ENCODE measurements at regions of chrX and their contacts with region 1.

Region 1: GRCh38 chrX:136953867-136954787 is 73.6 kb upstream of the RBMX start:
- DNase-seq: peak; percentile 41
- H3K4me3 ChIP-seq: no peak overlapping the region
- H3K27ac ChIP-seq: no peak overlapping the region
- H3K4me1 ChIP-seq: no peaks in the 10 kb centered on the region
- H3K27me3 ChIP-seq: no peaks in the 10 kb centered on the region
- CTCF ChIP-seq: peak; percentile 48 to 59

Region 2: DNA sequence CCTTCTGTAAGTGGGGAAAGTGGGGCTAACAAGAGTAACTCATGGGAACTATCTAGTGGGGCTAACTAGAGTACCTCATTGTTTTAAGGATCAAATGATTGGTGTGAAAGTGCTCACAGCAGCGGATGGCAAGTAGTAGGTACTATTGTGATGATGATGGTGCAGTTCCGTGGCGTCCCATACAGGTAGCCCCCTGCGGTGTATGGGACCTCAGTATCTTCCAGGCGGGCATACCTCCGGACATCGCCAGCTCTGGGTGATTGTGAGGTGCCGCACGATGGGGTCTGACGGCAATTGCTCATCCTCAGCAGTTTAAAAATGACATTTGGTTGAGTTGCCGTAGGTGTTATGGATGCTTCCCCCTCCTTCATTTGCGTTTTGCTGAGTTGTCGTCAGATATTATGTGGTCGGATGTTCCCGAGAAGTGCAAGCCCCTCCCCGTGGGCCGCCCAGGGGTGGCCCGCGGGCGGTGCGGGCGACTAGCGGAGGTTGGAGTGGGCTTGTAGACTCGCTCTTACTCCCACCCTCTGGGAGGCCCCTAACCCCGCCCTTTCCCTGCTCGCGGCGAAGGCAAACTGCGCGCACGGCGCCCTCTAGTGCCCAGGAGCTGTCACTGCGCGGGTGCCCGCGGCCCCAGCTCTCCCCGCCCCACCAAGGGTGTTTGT is 98.0 kb after region 1 on chrX:
- CTCF ChIA-PET with region 1: no interaction called
- dilution Hi-C with region 1: no loop called
- in situ Hi-C with region 1: no loop called
- intact Hi-C with region 1: loop called (anchors 1 kb)
- DNase-seq: peak; percentile 14
- H3K4me3 ChIP-seq: peak overlapping the region; percentile 33 to 41 (median 36)
- H3K27ac ChIP-seq: no peak overlapping the region
- H3K4me1 ChIP-seq: no peaks in the 10 kb centered on the region
- H3K27me3 ChIP-seq: peaks cover 5% of the 10 kb centered on the region
- CTCF ChIP-seq: peak; percentile 44 to 77

Region 3: DNA sequence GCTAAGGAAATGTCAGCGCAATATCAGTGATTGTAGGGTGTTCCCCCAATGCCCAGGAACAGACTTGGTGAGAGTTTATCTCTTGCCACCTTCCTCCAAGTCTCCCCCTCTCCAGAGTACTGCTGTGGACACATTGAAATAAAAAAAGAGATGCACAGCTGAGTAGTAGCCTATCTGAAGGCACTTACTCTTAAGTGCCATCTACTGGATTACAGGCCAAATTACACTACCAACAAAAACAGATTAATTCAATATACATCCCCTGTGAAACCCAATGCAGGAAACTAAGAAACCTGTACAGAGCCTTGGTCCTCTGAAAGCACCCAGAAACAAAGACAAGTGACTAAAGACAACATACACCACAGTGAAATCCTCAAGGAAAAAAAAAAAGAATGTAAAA is 1072.1 kb after region 1 on chrX:
- CTCF ChIA-PET with region 1: no interaction called
- dilution Hi-C with region 1: no loop called
- in situ Hi-C with region 1: no loop called
- intact Hi-C with region 1: loop called (anchors 10 kb)
- DNase-seq: no peak
- H3K4me3 ChIP-seq: no peak overlapping the region
- H3K27ac ChIP-seq: no peak overlapping the region
- H3K4me1 ChIP-seq: no peaks in the 10 kb centered on the region
- H3K27me3 ChIP-seq: no peaks in the 10 kb centered on the region
- CTCF ChIP-seq: peak; percentile 7 to 33

Region 4: DNA sequence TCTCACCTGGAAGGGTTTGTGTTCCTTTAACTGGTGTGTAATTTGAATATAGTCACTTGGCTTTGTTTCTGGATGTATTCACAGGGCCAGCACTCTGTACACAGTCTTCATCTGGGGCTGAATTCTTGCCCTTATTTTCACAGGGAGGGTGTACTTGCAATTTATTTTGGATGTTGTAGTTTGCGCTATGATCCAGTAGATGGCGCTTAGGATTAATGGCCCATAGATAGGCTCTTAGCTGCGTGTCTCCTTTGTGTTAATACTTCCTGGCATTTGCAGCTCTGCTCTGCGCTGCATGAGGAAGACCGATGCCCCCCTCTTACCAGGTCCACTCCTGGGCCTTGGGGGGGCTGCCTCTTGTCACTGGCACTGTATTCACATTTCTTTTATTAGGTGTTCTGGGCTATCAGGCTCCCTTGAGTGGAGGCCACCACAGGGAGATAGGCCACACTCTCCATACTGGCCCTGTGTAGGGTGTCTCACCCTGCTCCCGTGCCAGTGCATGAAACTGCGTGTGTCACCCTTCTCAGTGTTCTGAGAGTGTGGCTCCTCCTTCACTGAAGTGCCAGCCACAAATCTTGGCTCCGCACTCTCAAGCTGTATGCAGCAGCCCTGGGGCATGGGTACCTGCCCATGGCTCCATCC is 1174.0 kb after region 1 on chrX:
- CTCF ChIA-PET with region 1: no interaction called
- dilution Hi-C with region 1: no loop called
- in situ Hi-C with region 1: no loop called
- intact Hi-C with region 1: loop called (anchors 5 kb)
- DNase-seq: peak; percentile 21
- H3K4me3 ChIP-seq: no peak overlapping the region
- H3K27ac ChIP-seq: no peak overlapping the region
- H3K4me1 ChIP-seq: no peaks in the 10 kb centered on the region
- H3K27me3 ChIP-seq: no peaks in the 10 kb centered on the region
- CTCF ChIP-seq: peak; percentile 60 to 69

Region 5: GRCh38 chrX:138745196-138745595 is 1791.1 kb after region 1 on chrX:
- CTCF ChIA-PET with region 1: no interaction called
- dilution Hi-C with region 1: no loop called
- in situ Hi-C with region 1: no loop called
- intact Hi-C with region 1: loop called (anchors 10 kb)
- DNase-seq: peak; percentile 36
- H3K4me3 ChIP-seq: no peak overlapping the region
- H3K27ac ChIP-seq: no peak overlapping the region
- H3K4me1 ChIP-seq: no peaks in the 10 kb centered on the region
- H3K27me3 ChIP-seq: no peaks in the 10 kb centered on the region
- CTCF ChIP-seq: peak; percentile 68 to 77

Measured in mammary epithelial cell (primary cell).